OCI-LY7 (cell line): ENCODE measurements at regions of chr13 and their contacts with region 1.

Region 1: GRCh38 chr13:53151336-53152056 is 122.9 kb downstream of the OLFM4 start:
- DNase-seq: peak; percentile 68
- H3K4me3 ChIP-seq: no peak overlapping the region
- H3K27ac ChIP-seq: no peak overlapping the region
- H3K4me1 ChIP-seq: no peaks in the 10 kb centered on the region
- CTCF ChIP-seq: peak; percentile 91

Region 2: DNA sequence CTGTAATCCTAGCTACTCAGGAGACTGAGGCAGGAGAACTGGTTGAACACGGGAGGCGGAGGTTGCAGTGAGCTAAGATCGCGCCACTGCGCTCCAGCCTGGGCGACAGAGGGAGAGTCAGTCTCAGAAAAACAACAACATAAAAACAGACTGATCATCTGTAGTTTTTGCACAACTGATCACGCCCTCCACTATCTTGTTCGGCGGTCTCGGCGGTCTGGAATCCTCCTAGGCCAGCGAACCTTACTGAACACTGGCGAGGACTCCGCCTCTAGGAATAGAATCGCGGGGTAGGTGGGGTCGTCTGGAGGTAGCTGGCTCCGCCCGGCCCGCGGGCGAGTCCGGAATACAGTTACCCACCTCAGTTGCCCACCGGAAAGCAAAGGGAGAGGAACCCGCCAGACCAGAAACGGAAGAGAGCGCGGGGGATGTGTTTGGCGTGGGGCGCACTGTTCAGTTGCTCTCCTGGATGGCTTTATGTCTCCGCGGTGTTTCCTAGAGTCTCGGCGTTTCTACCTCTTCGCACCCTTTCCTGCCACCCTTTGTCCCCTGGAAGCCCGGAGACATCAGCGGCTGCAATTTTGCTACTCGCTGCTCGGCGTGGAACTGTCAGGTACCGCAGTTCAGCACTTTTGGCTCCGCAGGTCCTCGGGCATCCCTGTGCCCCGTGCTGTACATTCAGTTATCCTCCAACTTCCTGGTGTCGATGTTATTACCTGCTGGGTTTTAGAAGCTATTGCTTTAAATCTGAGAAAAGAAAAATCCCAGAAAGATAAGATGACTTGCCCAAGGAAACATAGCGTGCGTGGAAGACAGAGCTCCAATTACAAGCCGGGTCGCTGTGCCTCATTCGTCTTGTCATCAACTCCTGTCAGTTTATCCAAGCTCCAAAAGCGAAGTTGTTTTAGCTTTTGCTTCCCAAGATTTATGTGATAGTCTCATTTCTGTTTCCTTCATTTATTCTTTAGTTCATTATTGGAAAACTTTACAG is 534.1 kb before region 1 on chr13:
- CTCF ChIA-PET with region 1: no interaction called
- POLR2A ChIA-PET with region 1: no interaction called
- intact Hi-C with region 1: loop called (anchors 10 kb)
- DNase-seq: peak; percentile 90
- H3K4me3 ChIP-seq: peak overlapping the region; percentile 76
- H3K27ac ChIP-seq: peak overlapping the region; percentile 45
- H3K4me1 ChIP-seq: peaks cover 25% of the 10 kb centered on the region
- CTCF ChIP-seq: no peak

Region 3: DNA sequence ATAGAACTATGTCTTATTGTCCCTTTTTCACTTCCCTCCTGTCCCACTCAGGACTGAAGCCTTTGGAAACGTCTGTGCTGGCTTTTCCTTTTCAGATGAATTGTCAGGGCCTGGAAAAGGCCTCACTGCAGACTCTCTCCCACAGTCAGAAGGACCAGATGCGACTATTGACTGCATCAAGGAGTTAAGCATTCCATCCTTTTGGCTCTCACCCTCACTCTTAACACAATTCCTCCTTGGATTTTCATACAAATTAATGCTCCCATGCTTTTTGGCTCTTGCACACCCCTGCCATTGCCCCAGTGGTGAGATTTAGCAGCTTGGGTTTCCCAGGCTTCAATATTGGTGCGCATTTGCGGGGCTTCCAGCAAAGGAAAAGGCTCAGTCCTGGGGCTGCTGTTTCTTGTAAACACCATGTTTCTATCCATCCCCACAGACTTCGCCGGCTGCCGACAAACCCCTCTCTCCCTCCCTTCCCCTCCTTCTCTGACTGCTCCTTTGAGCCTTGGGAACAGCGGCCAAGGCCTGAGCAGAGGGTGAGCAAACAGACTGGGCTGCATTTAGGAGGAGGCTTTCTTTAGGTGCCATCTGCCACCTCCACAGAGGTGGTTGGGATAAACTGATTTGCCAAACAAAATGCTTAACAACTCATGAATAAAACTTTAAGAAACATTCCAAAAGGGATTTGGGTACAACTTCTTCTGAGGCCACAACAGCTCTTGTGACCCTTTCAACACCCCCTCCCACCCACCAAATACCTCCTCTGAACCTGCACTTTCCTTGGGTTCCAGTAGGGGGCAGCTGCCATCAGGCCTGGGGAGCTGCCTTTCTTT is 254.5 kb before region 1 on chr13:
- CTCF ChIA-PET with region 1: no interaction called
- POLR2A ChIA-PET with region 1: no interaction called
- intact Hi-C with region 1: loop called (anchors 5 kb)
- DNase-seq: peak; percentile 24
- H3K4me3 ChIP-seq: no peak overlapping the region
- H3K27ac ChIP-seq: no peak overlapping the region
- H3K4me1 ChIP-seq: no peaks in the 10 kb centered on the region
- CTCF ChIP-seq: peak; percentile 70

Region 4: GRCh38 chr13:52968074-52968700 is 183.3 kb before region 1 on chr13:
- CTCF ChIA-PET with region 1: no interaction called
- POLR2A ChIA-PET with region 1: no interaction called
- intact Hi-C with region 1: loop called (anchors 5 kb)
- DNase-seq: peak; percentile 74
- H3K4me3 ChIP-seq: no peak overlapping the region
- H3K27ac ChIP-seq: no peak overlapping the region
- H3K4me1 ChIP-seq: no peaks in the 10 kb centered on the region
- CTCF ChIP-seq: peak; percentile 93